ENCODE measurements at regions of chr12 and their contacts with region 1.

Region 1: DNA sequence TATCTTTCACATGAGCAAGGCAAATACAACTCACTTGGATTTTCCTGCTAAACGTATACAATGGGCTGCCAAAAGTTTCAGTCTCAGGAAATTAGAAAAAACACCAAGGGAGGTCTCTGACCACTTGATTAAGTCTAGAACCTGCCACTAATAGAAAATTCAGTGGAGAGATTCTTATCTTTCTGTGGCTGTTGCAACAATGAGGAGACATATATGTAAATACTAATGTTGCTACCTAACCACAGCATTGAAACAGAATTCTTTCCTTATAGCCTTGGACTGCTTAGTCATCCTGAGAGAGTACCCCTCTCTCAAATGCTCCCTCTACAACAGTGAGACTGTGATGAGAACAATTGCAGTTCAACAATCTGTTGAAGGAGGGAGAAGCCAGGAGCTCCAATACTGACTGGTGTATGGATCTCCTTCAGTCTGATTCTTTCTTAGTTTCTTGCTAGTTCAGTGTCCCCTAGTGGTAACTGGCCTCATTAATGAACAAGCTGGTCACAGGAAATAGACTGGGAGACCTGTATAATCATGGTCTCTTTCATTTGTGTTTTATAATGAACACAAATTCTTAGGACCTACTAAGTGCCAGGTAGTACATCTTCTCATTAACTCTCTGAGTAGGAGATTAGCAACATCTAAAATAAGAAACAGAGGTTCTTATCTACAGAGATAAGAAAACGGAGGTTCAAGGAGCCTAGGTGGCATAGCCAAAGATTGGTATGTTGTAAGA is 164.5 kb downstream of the SLC38A4 start:
- DNase-seq: peak in 7 of 9 donors; percentile 18 to 61 (median 50)
- ATAC-seq: peak; percentile 79
- H3K4me3 ChIP-seq: no peak overlapping the region
- H3K4me3 Mint-ChIP-seq: peak overlapping the region in 2 of 10 donors; percentile 31 to 43
- H3K27ac ChIP-seq: no peak overlapping the region
- H3K27ac Mint-ChIP-seq: peak overlapping the region in 4 of 9 donors; percentile 32 to 58 (median 40)
- H3K4me1 ChIP-seq: peaks cover 0 to 9% of the 10 kb centered on the region in 2 donors
- H3K4me1 Mint-ChIP-seq: peaks cover 11 to 53% (median 28%) of the 10 kb centered on the region in 7 donors
- H3K27me3 ChIP-seq: no peaks in the 10 kb centered on the region
- H3K27me3 Mint-ChIP-seq: no peaks in the 10 kb centered on the region

Region 2: DNA sequence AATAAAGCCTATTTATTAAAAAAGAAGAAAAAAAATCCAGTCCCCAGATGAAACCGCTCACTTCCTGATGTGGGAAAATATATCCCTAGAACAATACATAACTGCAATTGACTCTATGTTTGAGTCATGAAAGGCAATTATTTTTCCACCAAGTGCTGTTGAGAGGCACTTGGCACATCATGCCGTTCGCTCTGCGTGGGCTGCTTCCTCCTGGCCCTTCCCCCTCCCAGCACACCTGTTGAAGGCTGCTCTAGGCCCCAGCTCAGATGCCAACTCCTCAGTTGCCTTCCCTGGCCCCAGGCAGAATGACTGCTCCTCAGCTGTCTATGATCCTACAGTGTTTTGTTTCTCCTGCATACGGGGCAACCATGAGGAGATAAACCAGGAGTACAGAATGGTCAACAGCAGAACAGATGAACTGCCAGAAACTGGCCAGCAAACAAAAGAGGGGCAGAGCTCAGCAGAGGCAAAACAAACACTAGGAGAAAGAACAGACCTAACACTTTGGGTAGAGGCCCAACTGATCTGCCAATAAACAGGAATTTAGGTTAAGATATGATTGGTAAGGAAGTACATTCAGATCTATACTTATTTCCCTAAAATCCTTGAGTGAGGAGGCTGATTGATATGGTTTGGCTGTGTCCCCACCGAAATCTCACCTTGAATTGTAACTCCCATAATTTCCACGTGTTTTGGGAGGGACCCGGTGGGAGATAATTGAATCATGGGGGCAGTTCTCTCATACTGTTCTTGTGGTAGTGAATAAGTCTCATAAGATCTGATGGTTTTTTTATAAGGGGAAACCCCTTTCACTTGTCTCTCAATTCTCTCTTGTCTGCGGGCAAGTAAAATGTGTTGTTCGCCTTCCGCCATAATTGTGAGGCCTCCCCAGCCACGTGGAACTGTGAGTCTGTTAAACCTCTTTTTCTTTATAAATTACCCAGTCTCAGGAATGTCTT is 451.1 kb before region 1 on chr12:
- CTCF ChIA-PET with region 1: no interaction called
- POLR2A ChIA-PET with region 1: no interaction called
- intact Hi-C with region 1: loop called in 1 of 2 experiments (anchors 5 kb)
- DNase-seq: peak in 8 of 9 donors; percentile 47 to 81 (median 68)
- ATAC-seq: peak; percentile 66
- H3K4me3 ChIP-seq: no peak overlapping the region
- H3K4me3 Mint-ChIP-seq: peak overlapping the region; percentile 47 to 76 (median 69)
- H3K27ac ChIP-seq: peak overlapping the region; percentile 78
- H3K27ac Mint-ChIP-seq: peak overlapping the region; percentile 89 to 100 (median 98)
- H3K4me1 ChIP-seq: peaks cover 65 to 72% of the 10 kb centered on the region in 2 donors
- H3K4me1 Mint-ChIP-seq: peaks cover 45 to 98% (median 96%) of the 10 kb centered on the region in 7 donors
- H3K27me3 ChIP-seq: no peaks in the 10 kb centered on the region
- H3K27me3 Mint-ChIP-seq: no peaks in the 10 kb centered on the region

Region 3: GRCh38 chr12:46382964-46383653 is 278.2 kb before region 1 on chr12:
- CTCF ChIA-PET with region 1: interaction called, 3 read pairs
- POLR2A ChIA-PET with region 1: interaction called, 5 read pairs
- intact Hi-C with region 1: loop called (anchors 1 kb)
- DNase-seq: peak; percentile 76 to 96 (median 90)
- ATAC-seq: peak; percentile 89
- H3K4me3 ChIP-seq: peak overlapping the region; percentile 61
- H3K4me3 Mint-ChIP-seq: peak overlapping the region; percentile 82 to 95 (median 91)
- H3K27ac ChIP-seq: peak overlapping the region; percentile 94
- H3K27ac Mint-ChIP-seq: peak overlapping the region; percentile 90 to 98 (median 97)
- H3K4me1 ChIP-seq: peaks cover 5 to 25% of the 10 kb centered on the region in 2 donors
- H3K4me1 Mint-ChIP-seq: peaks cover 24 to 53% (median 47%) of the 10 kb centered on the region in 7 donors
- H3K27me3 ChIP-seq: no peaks in the 10 kb centered on the region
- H3K27me3 Mint-ChIP-seq: no peaks in the 10 kb centered on the region

Region 4: DNA sequence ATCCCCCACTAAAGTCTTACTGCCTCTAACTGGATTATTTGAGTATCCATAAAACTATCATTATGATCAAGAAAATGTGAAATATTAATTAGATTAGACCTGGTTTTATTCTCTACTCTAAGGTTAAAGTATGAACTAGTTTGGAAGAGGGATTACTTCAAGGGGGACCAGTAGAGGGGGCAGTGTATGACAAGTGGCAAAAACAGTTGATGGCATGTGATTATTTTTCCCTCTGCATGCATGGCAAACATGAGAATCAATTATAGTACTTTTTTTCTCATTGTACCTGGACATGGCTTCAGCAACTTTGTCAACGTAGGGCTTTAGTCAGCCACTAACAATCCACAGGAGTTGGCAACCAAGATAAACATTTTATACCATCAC is 143.7 kb before region 1 on chr12:
- CTCF ChIA-PET with region 1: interaction called, 3 read pairs
- POLR2A ChIA-PET with region 1: no interaction called
- intact Hi-C with region 1: loop called (anchors 1 to 2 kb)
- DNase-seq: no peak
- ATAC-seq: no peak
- H3K4me3 ChIP-seq: no peak overlapping the region
- H3K4me3 Mint-ChIP-seq: peak overlapping the region in 9 of 10 donors; percentile 35 to 82 (median 65)
- H3K27ac ChIP-seq: no peak overlapping the region
- H3K27ac Mint-ChIP-seq: peak overlapping the region; percentile 2 to 93 (median 80)
- H3K4me1 ChIP-seq: peaks cover 0 to 27% of the 10 kb centered on the region in 2 donors
- H3K4me1 Mint-ChIP-seq: peaks cover 28 to 77% (median 62%) of the 10 kb centered on the region in 7 donors
- H3K27me3 ChIP-seq: no peaks in the 10 kb centered on the region
- H3K27me3 Mint-ChIP-seq: no peaks in the 10 kb centered on the region

Region 5: GRCh38 chr12:46590991-46591703 is 70.1 kb before region 1 on chr12:
- CTCF ChIA-PET with region 1: interaction called, 3 read pairs
- POLR2A ChIA-PET with region 1: no interaction called
- intact Hi-C with region 1: loop called in 1 of 2 experiments (anchors 5 kb)
- DNase-seq: no peak
- ATAC-seq: no peak
- H3K4me3 ChIP-seq: no peak overlapping the region
- H3K4me3 Mint-ChIP-seq: no peak overlapping the region
- H3K27ac ChIP-seq: no peak overlapping the region
- H3K27ac Mint-ChIP-seq: peak overlapping the region in 4 of 9 donors; percentile 15 to 82 (median 52)
- H3K4me1 ChIP-seq: peaks cover 2 to 4% of the 10 kb centered on the region in 2 donors
- H3K4me1 Mint-ChIP-seq: peaks cover 13 to 48% (median 42%) of the 10 kb centered on the region in 7 donors
- H3K27me3 ChIP-seq: no peaks in the 10 kb centered on the region
- H3K27me3 Mint-ChIP-seq: no peaks in the 10 kb centered on the region

Region 6: GRCh38 chr12:47202176-47202575 is 540.9 kb after region 1 on chr12:
- CTCF ChIA-PET with region 1: no interaction called
- POLR2A ChIA-PET with region 1: no interaction called
- intact Hi-C with region 1: no loop called
- DNase-seq: no peak
- ATAC-seq: no peak
- H3K4me3 ChIP-seq: no peak overlapping the region
- H3K4me3 Mint-ChIP-seq: peak overlapping the region in 5 of 10 donors; percentile 17 to 52 (median 24)
- H3K27ac ChIP-seq: peak overlapping the region; percentile 41
- H3K27ac Mint-ChIP-seq: peak overlapping the region in 8 of 9 donors; percentile 42 to 98 (median 72)
- H3K4me1 ChIP-seq: peaks cover 48 to 49% of the 10 kb centered on the region in 2 donors
- H3K4me1 Mint-ChIP-seq: peaks cover 47 to 97% (median 85%) of the 10 kb centered on the region in 7 donors
- H3K27me3 ChIP-seq: no peaks in the 10 kb centered on the region
- H3K27me3 Mint-ChIP-seq: no peaks in the 10 kb centered on the region

Measured in naive thymus-derived CD4-positive, alpha-beta T cell (primary cell).